Kidney (tissue), 22 donors: ENCODE measurements at regions of chr2 and their contacts with region 1.

Region 1: DNA sequence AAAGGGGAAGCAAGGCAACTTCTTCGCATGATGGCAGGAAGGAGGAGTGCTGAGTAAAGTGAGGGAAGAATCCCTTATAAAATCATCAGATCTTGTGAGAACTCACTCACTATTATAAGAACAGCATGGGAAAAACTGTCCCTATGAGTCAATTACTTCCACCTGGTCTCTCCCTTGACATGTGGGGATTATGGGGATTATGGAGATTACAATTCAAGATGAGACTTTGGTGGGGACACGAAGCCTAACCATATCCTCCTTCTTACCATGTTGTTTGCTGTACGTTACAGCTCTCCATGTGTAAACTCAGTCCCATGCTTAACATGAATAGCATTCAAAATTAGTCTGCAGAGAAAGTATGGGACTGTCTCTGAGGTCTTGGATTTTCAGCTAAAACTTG is 1096.8 kb upstream of the ACVR2A start:
- DNase-seq: no peak
- H3K4me3 ChIP-seq: no peak overlapping the region
- H3K27ac ChIP-seq: no peak overlapping the region
- H3K4me1 ChIP-seq: no peaks in the 10 kb centered on the region
- H3K27me3 ChIP-seq: no peaks in the 10 kb centered on the region
- CTCF ChIP-seq: no peak

Region 2: GRCh38 chr2:146481629-146482028 is 266.4 kb before region 1 on chr2:
- intact Hi-C with region 1: no loop called
- DNase-seq: no peak
- H3K4me3 ChIP-seq: no peak overlapping the region
- H3K27ac ChIP-seq: no peak overlapping the region
- H3K4me1 ChIP-seq: no peaks in the 10 kb centered on the region
- H3K27me3 ChIP-seq: no peaks in the 10 kb centered on the region
- CTCF ChIP-seq: no peak

Region 3: DNA sequence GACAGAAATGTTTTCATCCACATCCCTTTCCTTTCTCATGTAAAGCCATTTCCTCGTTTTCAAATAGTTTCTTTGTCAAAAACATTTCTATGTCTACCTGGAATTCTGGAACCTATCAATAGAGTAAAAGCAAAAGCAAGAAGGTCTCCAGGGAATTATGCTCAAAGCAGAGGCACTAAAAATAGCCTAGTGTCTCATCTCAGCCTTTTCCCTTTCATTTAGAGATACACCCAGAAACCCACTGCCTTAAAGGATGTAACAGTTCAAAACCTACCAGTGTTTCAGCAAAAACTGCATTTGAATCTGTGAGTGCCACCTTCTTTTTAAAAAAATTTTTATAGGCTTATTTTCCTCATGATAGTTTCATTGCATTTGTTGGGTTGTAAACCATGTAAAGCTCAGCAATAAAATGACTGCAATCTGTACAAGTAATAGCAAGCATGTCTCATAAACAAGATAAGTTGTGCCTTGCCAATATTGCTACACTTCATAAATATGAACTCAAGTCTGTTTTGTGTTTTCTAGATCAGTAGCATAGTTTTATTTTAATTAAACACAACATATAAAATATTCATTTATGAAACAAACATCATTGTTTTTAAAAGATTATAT is 169.5 kb after region 1 on chr2:
- intact Hi-C with region 1: loop called (anchors 10 kb)
- DNase-seq: no peak
- H3K4me3 ChIP-seq: no peak overlapping the region
- H3K27ac ChIP-seq: no peak overlapping the region
- H3K4me1 ChIP-seq: no peaks in the 10 kb centered on the region
- H3K27me3 ChIP-seq: no peaks in the 10 kb centered on the region
- CTCF ChIP-seq: no peak